Right cardiac atrium (tissue), 5 donors: ENCODE measurements at regions of chr4 and their contacts with region 1.

Region 1: DNA sequence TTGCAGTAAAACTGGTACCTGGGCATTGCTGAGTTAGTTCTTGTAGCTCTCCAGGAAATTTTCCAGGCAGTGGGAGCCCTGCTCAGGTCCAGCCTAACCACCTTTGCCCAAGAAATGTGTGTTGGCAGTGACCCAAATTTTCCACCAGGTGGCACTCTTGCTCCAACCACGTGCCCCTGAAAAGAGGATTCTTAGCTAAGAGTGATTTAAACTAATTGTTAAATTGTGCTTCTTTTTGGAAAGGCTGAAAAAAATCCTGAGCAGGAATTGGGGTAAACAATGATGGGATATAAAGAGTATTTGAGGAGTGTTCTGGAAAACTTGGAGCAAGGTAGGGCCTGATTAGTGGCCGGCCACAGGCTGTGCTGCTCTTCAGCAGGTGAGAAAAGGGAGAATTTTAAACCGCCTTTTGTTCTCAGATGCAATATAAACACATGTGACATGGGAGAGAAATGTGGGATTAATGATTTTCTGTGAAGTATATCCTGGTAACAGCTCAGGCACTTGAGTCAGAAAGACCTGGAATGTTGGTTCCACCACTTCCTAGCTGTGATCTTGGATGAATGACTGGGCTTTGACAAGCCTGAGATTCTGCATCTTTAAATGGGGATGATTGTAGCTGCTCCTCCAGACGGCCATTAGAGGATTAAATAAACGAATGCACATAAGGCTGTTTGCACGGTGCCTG is 219.6 kb downstream of the PTTG2 start:
- DNase-seq: peak; percentile 57 to 85 (median 70)
- ATAC-seq: peak; percentile 62 to 69
- H3K4me3 ChIP-seq: no peak overlapping the region
- H3K27ac ChIP-seq: no peak overlapping the region
- H3K4me1 ChIP-seq: no peaks in the 10 kb centered on the region
- H3K27me3 ChIP-seq: no peaks in the 10 kb centered on the region

Region 2: DNA sequence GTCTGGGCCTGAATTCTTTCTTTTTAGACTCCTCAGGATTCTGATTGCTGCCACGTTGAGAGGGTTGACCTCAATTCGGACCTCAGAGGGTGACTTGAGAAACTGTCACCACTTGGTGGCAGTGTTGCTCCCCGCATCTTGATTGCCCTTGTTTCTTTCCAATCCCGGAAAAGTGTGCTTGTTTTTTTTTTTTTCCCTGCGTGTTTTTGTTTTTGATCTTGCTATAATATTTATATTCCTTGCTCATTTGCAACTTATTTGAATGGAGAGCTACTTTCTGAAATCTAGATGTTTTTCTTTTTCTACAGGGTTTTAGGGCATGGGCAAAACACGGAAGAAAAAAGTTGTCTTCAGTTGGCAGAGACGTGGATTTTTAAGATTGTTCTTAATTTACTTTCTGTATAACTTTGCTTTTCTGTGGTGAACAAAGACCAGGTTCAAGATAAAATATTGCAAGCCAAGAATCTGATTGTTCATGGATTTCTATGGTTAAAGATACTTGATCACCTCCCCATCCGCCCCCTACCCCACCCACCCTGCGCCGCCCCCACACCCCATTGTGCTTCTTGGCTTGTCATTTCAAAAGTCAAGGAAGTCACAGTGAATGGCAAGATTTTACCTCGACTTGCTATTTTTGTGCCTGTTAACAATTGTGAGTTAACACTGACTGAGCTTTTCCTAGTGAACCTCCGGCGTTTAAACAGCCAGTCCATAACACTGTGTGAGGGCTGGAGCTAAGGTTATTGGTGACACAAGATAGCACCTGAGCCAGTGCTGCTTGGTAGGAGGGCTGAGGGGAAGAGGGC is 117.5 kb before region 1 on chr4:
- intact Hi-C with region 1: loop called in 3 of 4 experiments (anchors 5 to 10 kb)
- DNase-seq: peak; percentile 76 to 89 (median 86)
- ATAC-seq: peak; percentile 69 to 77
- H3K4me3 ChIP-seq: peak overlapping the region; percentile 46
- H3K27ac ChIP-seq: peak overlapping the region; percentile 95
- H3K4me1 ChIP-seq: peaks cover 4% of the 10 kb centered on the region
- H3K27me3 ChIP-seq: no peaks in the 10 kb centered on the region

Region 3: DNA sequence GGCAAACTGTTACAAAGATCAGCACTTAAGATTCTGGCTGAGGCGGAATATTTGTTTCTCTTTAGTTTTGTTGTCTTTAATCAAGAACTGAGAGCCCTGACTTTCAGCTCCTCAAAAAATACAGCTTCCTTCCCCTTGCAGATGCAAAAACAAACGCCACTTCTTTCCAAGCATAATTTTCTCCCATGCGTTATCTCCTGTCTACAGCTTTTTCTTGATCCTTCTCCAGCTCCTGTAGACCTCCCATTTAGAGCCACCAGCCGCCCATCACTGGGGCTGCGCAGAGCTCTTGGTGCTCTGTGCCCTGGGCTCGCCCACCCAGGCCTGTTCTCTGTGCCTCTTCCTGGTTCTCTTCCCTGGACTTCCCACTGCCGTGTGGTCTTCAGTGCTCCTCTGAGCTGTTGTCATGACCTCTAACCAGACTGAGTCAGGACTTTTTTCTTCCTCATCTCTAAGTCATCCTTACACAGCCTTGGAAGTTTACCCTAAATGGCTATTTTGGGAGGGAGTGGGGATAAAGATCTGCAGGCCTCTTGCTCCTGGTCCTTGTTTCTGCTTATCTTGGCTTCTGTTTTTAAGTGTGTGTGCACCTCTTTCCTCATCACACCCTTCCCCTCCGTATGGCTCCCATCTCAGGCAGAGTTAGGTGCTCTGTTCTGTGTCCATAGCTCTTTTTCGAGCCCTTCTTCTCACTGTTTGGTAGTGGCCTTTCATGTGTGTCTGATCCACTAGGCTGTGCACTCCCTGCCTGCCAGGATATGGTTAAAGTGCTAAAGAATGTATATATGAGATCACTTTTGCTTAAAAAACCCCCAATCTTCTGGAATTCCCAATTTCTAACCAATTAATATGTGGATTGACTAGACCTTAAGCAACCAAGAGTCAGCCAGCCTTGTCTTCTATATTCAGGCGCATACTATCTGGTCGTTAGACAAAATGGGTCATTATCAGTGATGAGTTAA is 97.1 kb before region 1 on chr4:
- intact Hi-C with region 1: loop called in 1 of 4 experiments (anchors 10 kb)
- DNase-seq: peak in 1 of 3 donors; percentile 61
- ATAC-seq: peak; percentile 56 to 57
- H3K4me3 ChIP-seq: no peak overlapping the region
- H3K27ac ChIP-seq: no peak overlapping the region
- H3K4me1 ChIP-seq: peaks cover 25% of the 10 kb centered on the region
- H3K27me3 ChIP-seq: no peaks in the 10 kb centered on the region

Region 4: DNA sequence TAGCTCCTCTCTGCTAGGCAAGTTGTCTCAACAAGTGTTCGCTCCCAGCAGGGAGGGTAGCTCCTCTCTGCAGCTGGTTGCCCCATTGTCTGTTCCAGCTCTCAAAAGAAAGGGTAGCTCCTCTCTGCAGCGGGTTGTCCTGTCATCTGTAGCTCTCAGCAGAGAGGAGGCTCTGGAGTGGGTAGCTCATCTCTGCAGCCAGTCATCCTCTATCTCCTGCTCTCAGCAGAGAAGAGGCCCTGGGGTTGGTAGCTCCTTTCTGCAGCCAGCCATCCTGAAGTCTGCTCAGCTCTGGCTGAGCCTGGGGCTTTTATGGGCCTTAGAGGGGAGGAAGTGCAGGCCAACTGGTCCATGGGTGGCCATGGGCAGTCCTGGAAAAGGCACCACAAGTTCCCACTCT is 123.1 kb after region 1 on chr4:
- intact Hi-C with region 1: no loop called
- DNase-seq: no peak
- ATAC-seq: no peak
- H3K4me3 ChIP-seq: no peak overlapping the region
- H3K27ac ChIP-seq: no peak overlapping the region
- H3K4me1 ChIP-seq: no peaks in the 10 kb centered on the region
- H3K27me3 ChIP-seq: no peaks in the 10 kb centered on the region

Region 5: DNA sequence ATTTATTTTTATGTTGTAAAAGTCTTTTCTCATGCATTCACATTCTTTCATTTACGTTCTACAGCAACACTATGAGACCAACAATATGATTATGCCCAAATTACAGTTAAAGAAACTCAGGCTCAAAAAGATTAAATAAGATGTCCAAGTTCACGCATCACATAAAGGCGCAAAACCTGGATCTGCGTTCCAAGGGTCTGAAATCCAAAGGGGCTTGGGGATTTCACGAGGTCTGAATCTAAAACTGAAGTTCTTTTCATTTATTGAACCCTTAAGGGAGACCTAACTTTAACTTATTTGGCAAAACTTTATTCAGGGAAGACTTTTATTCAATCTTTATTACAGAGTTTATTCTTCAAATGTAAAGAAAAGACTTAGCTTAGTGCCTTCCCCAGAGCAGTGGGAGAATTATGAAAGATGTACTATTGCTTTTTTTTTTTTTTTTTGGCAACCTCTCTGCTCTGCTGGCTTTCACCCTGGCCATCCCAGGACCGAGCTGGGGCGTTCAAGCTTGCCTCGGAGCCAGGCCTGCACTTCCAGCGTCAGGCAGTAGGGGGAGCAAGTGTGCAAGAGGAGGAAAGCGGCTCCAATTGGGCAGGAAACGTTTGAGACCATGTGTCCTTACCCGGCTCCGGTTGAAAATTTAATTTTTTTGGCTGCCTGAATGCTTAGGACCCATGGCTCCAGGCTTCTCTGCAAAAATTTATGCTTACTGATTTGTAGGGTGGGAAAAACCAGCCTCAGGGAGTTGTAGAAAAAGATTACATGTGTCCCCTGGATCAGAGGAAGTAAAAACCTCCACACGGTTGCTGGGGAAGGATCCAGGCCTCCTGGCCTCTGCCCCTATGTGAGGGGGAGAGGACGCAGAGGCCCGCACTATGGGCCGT is 139.9 kb after region 1 on chr4:
- intact Hi-C with region 1: loop called in 3 of 4 experiments (anchors 5 to 10 kb)
- DNase-seq: peak; percentile 93 to 98 (median 98)
- ATAC-seq: peak; percentile 83 to 85
- H3K4me3 ChIP-seq: peak overlapping the region; percentile 46
- H3K27ac ChIP-seq: peak overlapping the region; percentile 94
- H3K4me1 ChIP-seq: no peaks in the 10 kb centered on the region
- H3K27me3 ChIP-seq: no peaks in the 10 kb centered on the region

Region 6: DNA sequence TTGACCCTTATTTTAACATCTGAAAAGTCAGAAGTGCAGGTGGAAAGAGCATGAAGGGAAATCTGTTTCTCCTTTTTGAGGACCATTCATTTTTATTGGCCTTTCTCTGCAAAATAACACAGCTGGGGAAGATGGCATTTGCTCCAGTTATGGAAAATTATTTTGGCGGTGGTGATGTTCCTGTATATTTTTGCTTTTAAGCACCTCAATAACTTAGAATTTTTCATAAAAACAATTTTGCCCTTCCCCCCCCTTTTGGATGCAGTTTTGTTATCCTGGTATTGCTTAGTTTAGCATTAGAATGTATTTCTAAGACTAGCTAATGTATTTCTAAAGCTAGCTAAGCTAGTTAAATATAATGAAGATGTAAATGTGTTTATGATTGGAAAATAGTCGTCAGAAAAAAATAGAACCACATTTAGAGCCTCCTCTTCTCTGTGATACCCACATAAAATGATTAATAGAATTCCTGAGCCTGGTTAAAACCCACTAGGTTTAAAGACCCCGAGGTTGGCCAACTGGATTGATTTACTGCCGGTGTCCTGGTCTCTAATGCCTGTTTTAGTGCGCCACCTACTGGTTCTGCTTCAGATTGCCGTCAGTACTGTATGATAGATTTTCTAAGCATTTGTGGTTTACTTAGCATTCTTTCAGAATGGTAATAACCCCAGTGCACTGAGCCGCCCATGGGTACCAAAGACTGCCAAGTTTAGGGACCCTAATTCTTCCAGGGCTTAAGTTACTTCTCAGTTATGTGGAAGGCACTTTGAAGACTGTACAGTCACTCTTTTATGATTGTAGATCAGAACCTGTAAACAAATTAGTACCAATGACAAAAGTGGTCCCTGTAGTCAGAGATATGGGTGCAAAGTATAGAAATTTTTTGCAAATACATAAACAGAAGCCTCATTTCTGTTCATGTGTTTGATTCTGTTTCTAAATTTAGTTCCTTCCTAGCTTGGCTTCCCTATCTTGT is 495.6 kb after region 1 on chr4:
- intact Hi-C with region 1: loop called (anchors 2 to 5 kb)
- DNase-seq: peak; percentile 69 to 85 (median 72)
- ATAC-seq: peak; percentile 32 to 43
- H3K4me3 ChIP-seq: no peak overlapping the region
- H3K27ac ChIP-seq: no peak overlapping the region
- H3K4me1 ChIP-seq: peaks cover 28% of the 10 kb centered on the region
- H3K27me3 ChIP-seq: no peaks in the 10 kb centered on the region

Region 7: DNA sequence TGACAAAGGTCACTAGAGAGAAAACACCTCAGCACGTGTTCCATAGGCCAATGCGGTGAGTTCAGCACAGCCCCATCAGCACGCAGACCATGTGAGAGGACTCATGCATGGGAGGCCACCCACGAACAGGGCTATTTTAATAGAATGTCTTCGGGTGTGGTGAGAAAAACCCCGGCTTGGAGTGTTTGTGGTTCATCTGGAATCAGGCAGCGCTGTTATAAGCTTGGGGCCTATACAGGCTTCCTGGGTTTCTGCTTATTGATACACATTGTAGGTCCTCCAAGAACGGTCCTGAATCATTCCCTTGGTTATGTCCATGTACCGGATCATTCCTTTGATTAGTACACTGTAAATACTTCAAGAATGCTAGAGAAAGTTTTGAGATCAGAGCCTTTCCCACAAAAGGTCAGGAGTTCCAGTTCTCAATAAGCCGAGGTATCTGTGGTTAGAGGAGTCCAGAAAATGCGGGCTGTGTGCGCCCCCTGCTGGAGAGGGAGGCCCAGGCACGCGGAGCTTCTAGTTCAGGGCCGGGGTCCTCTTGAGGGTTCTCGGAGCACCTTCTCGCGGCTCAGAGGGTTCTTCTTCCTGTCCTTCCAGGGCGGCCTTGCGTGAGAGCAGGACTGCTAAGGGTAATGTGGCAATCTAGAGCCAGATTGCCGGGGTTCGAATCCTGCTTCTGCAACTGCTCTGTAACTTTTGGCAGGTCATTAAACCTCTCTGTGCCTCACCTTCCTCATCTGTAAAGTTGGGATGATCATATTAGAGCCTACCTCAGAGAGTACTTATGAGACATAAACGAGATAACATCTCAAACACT is 551.2 kb after region 1 on chr4:
- intact Hi-C with region 1: loop called in 2 of 4 experiments (anchors 2 kb)
- DNase-seq: peak; percentile 81 to 94 (median 93)
- ATAC-seq: peak; percentile 85 to 88
- H3K4me3 ChIP-seq: no peak overlapping the region
- H3K27ac ChIP-seq: no peak overlapping the region
- H3K4me1 ChIP-seq: no peaks in the 10 kb centered on the region
- H3K27me3 ChIP-seq: no peaks in the 10 kb centered on the region